GM12878 (cell line): ENCODE measurements at regions of chr9 and their contacts with region 1.

Region 1: DNA sequence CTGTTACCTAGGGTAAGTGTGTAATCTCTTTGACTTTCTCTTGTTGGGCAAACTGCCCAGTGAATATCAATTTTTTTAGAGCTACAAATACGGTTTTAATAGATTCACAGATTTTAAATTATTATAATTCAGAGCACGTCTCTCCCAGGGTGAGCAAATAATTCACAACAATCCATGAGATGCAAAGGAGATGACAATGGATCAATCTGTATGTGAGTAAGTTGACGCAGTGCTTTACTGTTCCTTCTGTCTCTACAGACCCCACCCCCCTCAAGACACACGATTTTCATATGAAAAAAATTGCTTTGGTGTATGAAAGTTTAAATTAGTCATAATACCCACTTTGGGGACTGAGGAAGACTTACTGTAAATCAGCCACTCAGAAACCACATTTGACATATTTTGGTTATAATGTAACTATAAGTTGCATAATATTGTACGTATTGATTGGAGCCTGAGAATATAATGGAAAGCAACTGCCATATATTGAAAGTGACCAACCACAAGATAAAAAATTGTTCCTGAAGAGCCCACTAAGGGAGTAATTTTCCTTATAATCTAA is 201.7 kb downstream of the BNC2 start:
- DNase-seq: no peak
- ATAC-seq: no peak
- H3K4me3 ChIP-seq: no peak overlapping the region
- H3K27ac ChIP-seq: no peak overlapping the region
- H3K4me1 ChIP-seq: no peaks in the 10 kb centered on the region
- H3K27me3 ChIP-seq: no peaks in the 10 kb centered on the region
- CTCF ChIP-seq: no peak
- EP300 ChIP-seq: no peak
- POLR2A ChIP-seq: no peak
- RAD21 ChIP-seq: no peak

Region 2: DNA sequence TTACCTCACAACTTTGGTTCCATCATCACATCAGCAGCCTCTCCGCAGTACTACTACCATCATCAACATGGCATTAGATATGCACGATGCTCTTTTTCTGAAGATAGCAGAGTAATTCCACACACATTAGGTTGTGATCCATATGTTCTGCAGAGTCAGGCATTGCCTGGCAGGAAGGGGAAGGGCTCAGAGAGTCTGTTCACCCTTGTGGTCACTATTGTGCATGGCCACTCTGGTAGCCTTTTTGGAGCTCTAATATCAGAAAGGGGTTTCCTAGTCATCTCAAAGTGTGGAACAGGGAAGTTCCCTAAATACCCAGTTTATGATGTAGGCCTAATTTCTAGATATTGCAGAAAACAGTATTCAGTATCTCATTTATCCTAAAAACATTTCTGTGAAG is 171.9 kb before region 1 on chr9:
- CTCF ChIA-PET with region 1: no interaction called
- POLR2A ChIA-PET with region 1: no interaction called
- RAD21 ChIA-PET with region 1: no interaction called
- SMC1A ChIA-PET with region 1: no interaction called
- in situ Hi-C with region 1: no loop called
- intact Hi-C with region 1: no loop called
- DNase-seq: no peak
- ATAC-seq: no peak; the same call in 2 of the 3 replicates
- H3K4me3 ChIP-seq: no peak overlapping the region
- H3K27ac ChIP-seq: no peak overlapping the region
- H3K4me1 ChIP-seq: no peaks in the 10 kb centered on the region
- H3K27me3 ChIP-seq: no peaks in the 10 kb centered on the region
- CTCF ChIP-seq: no peak
- EP300 ChIP-seq: no peak
- POLR2A ChIP-seq: no peak
- RAD21 ChIP-seq: no peak

Region 3: DNA sequence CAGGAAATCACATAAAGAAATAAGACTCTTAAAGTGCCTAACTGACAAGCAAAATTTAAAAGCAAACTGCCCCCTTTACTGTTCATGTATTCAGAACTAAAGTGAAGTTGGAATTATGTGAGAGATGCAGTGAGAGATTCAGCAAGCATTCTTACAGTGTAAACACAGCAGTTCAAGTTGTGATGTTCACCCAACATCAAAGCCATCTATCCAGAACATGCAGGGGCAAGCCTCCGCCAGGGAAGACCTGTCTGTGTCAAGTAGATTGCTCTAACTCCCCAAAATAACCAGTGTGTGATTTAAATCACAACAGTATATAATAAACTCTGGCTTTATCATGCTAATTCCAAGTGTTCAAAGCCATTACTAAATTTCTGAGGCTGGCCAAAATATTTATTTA is 31.6 kb before region 1 on chr9:
- CTCF ChIA-PET with region 1: no interaction called
- POLR2A ChIA-PET with region 1: no interaction called
- RAD21 ChIA-PET with region 1: no interaction called
- SMC1A ChIA-PET with region 1: no interaction called
- in situ Hi-C with region 1: no loop called
- intact Hi-C with region 1: no loop called
- DNase-seq: no peak
- ATAC-seq: no peak
- H3K4me3 ChIP-seq: no peak overlapping the region
- H3K27ac ChIP-seq: no peak overlapping the region
- H3K4me1 ChIP-seq: no peaks in the 10 kb centered on the region
- H3K27me3 ChIP-seq: no peaks in the 10 kb centered on the region
- CTCF ChIP-seq: no peak
- EP300 ChIP-seq: no peak
- POLR2A ChIP-seq: no peak
- RAD21 ChIP-seq: no peak

Region 4: DNA sequence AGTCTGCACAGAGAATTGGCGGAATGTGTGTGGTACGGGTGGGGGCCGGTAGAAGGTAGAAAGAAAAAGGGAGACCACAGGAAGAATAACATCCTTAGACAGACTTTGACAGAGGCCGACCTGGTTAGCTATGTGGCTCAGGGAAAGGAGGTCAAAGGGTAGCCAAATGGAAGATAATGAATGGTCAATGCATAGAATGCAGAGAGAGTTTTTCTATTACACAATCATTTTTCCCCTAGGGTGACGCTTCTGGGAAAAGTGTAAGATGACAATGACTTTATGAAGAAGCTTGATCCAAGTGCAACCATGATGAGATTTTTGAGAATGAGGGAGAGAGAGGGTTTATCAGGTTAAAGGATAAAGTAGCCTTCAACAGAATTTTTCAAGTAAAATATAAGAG is 21.5 kb before region 1 on chr9:
- CTCF ChIA-PET with region 1: interaction called, 4 read pairs
- POLR2A ChIA-PET with region 1: no interaction called
- RAD21 ChIA-PET with region 1: no interaction called
- SMC1A ChIA-PET with region 1: interaction called, 3 read pairs
- in situ Hi-C with region 1: no loop called
- intact Hi-C with region 1: loop called (anchors 1 kb)
- DNase-seq: no peak
- ATAC-seq: no peak
- H3K4me3 ChIP-seq: no peak overlapping the region
- H3K27ac ChIP-seq: no peak overlapping the region
- H3K4me1 ChIP-seq: no peaks in the 10 kb centered on the region
- H3K27me3 ChIP-seq: no peaks in the 10 kb centered on the region
- CTCF ChIP-seq: no peak
- EP300 ChIP-seq: no peak
- POLR2A ChIP-seq: no peak
- RAD21 ChIP-seq: no peak